Endothelial cell of umbilical vein (primary cell): ENCODE measurements at regions of chr3 and their contacts with region 1.

Region 1: DNA sequence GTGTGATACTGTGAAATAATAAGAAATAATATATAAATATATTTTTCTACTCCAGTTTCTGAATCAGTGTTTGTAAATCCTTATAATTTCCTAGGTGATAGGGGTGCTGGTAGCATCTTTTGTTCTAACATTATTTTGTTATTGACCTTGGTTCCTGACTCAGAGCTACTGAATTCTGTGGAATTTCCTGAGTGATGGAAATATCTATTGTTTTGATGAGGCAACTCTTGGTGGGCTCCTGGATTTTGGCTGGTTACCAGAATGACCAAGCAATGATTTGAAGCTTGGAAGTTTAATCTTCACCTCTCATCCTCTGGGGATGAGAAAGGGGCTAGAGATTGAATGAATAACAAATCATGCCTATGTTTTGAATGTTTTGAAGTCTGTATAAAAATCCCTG is 377.3 kb downstream of the LPP start:
- DNase-seq: peak; percentile 87
- H3K4me3 ChIP-seq: no peak overlapping the region
- H3K27ac ChIP-seq: peak overlapping the region; percentile 85
- H3K4me1 ChIP-seq: peaks cover 37% of the 10 kb centered on the region
- H3K27me3 ChIP-seq: no peaks in the 10 kb centered on the region
- CTCF ChIP-seq: no peak
- POLR2A ChIP-seq: no peak

Region 2: GRCh38 chr3:188452158-188452772 is 78.9 kb before region 1 on chr3:
- CTCF ChIA-PET with region 1: no interaction called
- POLR2A ChIA-PET with region 1: no interaction called
- dilution Hi-C with region 1: no loop called
- intact Hi-C with region 1: loop called (anchors 5 kb)
- DNase-seq: peak; percentile 61
- H3K4me3 ChIP-seq: no peak overlapping the region
- H3K27ac ChIP-seq: peak overlapping the region; percentile 46
- H3K4me1 ChIP-seq: peaks cover 30% of the 10 kb centered on the region
- H3K27me3 ChIP-seq: no peaks in the 10 kb centered on the region
- CTCF ChIP-seq: no peak
- POLR2A ChIP-seq: no peak

Region 3: GRCh38 chr3:188468662-188469061 is 62.5 kb before region 1 on chr3:
- CTCF ChIA-PET with region 1: no interaction called
- POLR2A ChIA-PET with region 1: no interaction called
- dilution Hi-C with region 1: no loop called
- intact Hi-C with region 1: loop called (anchors 2 kb)
- DNase-seq: no peak
- H3K4me3 ChIP-seq: no peak overlapping the region
- H3K27ac ChIP-seq: peak overlapping the region; percentile 28
- H3K4me1 ChIP-seq: peaks cover 16% of the 10 kb centered on the region
- H3K27me3 ChIP-seq: no peaks in the 10 kb centered on the region
- CTCF ChIP-seq: no peak
- POLR2A ChIP-seq: no peak

Region 4: DNA sequence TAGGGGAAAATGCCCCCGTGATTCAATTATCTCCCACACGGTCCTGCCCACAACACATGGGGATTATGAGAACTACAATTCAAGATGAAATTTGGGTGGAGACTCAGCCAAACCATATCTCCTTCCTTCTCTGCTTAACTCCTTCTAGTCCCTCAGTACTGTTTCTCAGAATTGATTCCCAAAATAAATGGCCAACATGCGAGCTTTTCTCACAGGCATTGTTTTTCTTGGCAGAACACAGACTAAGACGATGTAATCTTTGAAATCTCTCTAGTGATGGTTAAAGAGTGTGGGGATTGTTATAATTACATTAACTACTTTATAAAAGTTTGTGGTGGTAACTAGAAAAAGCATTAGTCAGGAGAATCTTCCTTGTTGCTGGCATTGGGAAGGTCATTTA is 10.7 kb before region 1 on chr3:
- CTCF ChIA-PET with region 1: interaction called, 10 read pairs
- POLR2A ChIA-PET with region 1: no interaction called
- dilution Hi-C with region 1: no loop called
- intact Hi-C with region 1: no loop called
- DNase-seq: no peak
- H3K4me3 ChIP-seq: no peak overlapping the region
- H3K27ac ChIP-seq: no peak overlapping the region
- H3K4me1 ChIP-seq: peaks cover 6% of the 10 kb centered on the region
- H3K27me3 ChIP-seq: no peaks in the 10 kb centered on the region
- CTCF ChIP-seq: no peak
- POLR2A ChIP-seq: no peak

Region 5: DNA sequence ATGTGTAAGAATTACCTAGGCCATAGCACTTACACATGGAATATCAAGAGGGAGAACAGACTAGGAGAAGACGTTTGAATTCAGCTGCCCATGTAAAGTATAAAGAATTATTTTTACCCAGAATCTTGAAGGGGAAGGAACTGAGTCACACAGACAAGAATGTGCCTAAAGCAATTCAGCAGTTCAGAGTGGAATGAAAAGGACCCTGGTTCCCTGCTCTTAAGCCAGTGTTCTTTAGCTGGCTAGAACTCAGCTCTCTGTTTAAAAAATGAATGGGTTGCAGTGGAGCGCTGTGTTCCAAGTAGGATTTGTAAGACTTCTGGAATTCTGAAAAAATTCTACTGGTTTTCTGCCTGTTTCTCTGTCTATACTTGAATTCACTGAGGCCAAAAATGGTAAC is 62.9 kb after region 1 on chr3:
- CTCF ChIA-PET with region 1: interaction called, 4 read pairs
- POLR2A ChIA-PET with region 1: no interaction called
- dilution Hi-C with region 1: no loop called
- intact Hi-C with region 1: loop called (anchors 1 kb)
- DNase-seq: peak; percentile 86
- H3K4me3 ChIP-seq: no peak overlapping the region
- H3K27ac ChIP-seq: peak overlapping the region; percentile 50
- H3K4me1 ChIP-seq: peaks cover 25% of the 10 kb centered on the region
- H3K27me3 ChIP-seq: no peaks in the 10 kb centered on the region
- CTCF ChIP-seq: no peak
- POLR2A ChIP-seq: no peak